T-cell (primary cell): ENCODE measurements at regions of chr1 and their contacts with region 1.

Region 1: GRCh38 chr1:37602750-37603694 is 7.3 kb upstream of the GNL2 start:
- DNase-seq: peak in 26 of 35 experiments; percentile 4 to 65 (median 24)
- ATAC-seq: peak; percentile 43 to 68 (median 61)
- H3K4me3 ChIP-seq: no peak overlapping the region
- H3K4me3 Mint-ChIP-seq: no peak overlapping the region
- H3K27ac ChIP-seq: no peak overlapping the region
- H3K27ac Mint-ChIP-seq: no peak overlapping the region
- H3K4me1 ChIP-seq: peaks cover 0 to 5% of the 10 kb centered on the region in 2 experiments
- H3K4me1 Mint-ChIP-seq: peaks cover 4 to 5% (median 4%) of the 10 kb centered on the region in 3 donors
- H3K27me3 ChIP-seq: peaks cover 0 to 17% of the 10 kb centered on the region in 2 experiments
- H3K27me3 Mint-ChIP-seq: peaks cover 9 to 11% of the 10 kb centered on the region in 2 donors

Region 2: DNA sequence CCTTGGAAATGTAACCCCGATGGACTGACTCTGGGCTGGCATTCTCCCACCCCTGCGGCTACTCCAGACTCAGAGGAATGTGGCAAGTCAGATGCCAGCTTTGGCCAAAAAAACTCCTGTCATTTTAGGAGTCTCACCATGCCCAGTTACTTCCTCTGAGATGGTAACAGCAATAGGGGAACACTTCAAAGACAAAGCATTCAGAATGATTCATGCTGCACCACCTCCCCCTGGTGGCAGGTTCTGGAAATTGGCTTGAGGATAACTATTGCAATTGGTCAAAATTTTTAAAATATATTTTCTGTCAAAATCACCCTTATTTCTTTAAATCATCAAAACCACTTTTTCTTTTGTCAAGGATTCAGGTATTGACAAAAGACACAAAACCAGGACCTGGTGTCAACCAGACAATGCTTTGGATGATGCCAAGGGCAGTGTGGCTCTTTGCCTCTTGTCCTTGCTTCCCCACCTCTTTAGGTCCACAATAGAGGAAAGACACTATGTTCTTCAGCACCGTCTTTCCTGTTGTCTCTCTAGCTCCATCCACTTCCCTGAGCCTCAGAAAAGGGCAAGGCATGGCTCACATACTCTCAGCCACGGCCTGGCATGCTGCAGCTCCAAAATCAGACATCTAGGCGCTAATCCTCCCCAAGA is 79.4 kb after region 1 on chr1:
- CTCF ChIA-PET with region 1: interaction called, 12 to 17 read pairs
- POLR2A ChIA-PET with region 1: interaction called in 1 of 2 experiments, 4 read pairs
- DNase-seq: peak; percentile 40 to 86 (median 72)
- ATAC-seq: peak; percentile 80 to 82 (median 81)
- H3K4me3 ChIP-seq: no peak overlapping the region
- H3K4me3 Mint-ChIP-seq: no peak overlapping the region
- H3K27ac ChIP-seq: no peak overlapping the region
- H3K27ac Mint-ChIP-seq: peak overlapping the region; percentile 49 to 73
- H3K4me1 ChIP-seq: peaks cover 0 to 4% of the 10 kb centered on the region in 2 experiments
- H3K4me1 Mint-ChIP-seq: peaks cover 0 to 3% (median 3%) of the 10 kb centered on the region in 3 donors
- H3K27me3 ChIP-seq: no peaks in the 10 kb centered on the region
- H3K27me3 Mint-ChIP-seq: no peaks in the 10 kb centered on the region

Region 3: GRCh38 chr1:37688926-37689325 is 85.9 kb after region 1 on chr1:
- CTCF ChIA-PET with region 1: interaction called, 8 to 10 read pairs
- POLR2A ChIA-PET with region 1: no interaction called
- DNase-seq: no peak
- ATAC-seq: no peak
- H3K4me3 ChIP-seq: peak overlapping the region in 1 of 2 donors; percentile 92
- H3K4me3 Mint-ChIP-seq: peak overlapping the region; percentile 95 to 99 (median 96)
- H3K27ac ChIP-seq: no peak overlapping the region
- H3K27ac Mint-ChIP-seq: peak overlapping the region in 1 of 2 donors; percentile 90
- H3K4me1 ChIP-seq: peaks cover 15 to 35% of the 10 kb centered on the region in 2 experiments
- H3K4me1 Mint-ChIP-seq: peaks cover 38 to 44% (median 42%) of the 10 kb centered on the region in 3 donors
- H3K27me3 ChIP-seq: no peaks in the 10 kb centered on the region
- H3K27me3 Mint-ChIP-seq: no peaks in the 10 kb centered on the region